Activated CD4-positive, alpha-beta memory T cell treated with anti-CD3 and anti-CD28 coated beads for 36 hours (primary cell): ENCODE measurements at regions of chrX and their contacts with region 1.

Region 1: DNA sequence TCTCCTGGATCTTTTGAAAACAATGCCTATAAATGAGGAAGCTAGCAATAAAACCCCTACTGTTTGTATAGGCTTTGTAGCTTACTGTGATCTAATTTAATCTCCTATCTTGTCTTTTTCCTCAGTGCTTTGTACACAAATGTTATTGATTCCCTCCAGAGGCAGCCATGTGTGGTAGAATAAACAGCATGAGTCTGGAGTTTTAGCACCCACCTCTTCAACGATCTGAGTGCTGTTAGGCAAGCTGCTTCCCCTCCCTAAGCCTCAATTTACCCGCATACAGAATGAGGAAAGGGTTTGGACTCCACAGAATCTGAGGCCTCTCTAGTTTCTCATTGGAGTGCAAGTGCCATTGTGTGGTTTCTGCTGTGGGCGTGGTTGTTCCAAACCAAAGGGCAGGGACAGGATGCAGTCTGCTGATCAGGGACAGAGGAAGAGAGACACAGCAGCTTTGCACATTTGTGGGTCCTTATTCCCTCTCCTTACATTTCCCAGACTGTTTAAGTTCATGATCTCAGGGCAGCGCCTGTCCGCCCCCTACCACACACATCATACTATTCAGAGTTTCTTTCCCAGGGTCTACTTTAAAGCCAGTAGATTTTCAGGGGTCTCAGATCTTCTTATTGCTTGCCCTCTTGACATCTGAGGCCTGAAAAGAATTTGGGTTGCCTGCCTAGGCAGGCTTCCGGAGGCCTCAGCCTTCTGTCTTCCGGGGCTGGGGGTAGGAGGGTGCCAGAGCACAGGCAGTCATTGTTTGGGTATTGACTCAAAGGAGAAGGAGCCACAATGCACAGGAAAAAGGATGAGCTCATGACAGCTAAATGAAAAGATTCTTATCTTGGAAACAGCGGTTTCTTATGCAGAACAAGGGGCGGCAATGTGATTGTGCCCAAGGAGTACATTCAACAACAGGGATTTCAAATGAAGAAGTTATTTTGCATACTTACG is 114.9 kb upstream of the TEX13D start:
- DNase-seq: peak; percentile 78
- H3K4me3 Mint-ChIP-seq: peak overlapping the region; percentile 54
- H3K27ac Mint-ChIP-seq: peak overlapping the region; percentile 96
- H3K4me1 Mint-ChIP-seq: peaks cover 66% of the 10 kb centered on the region
- H3K27me3 Mint-ChIP-seq: no peaks in the 10 kb centered on the region

Region 2: GRCh38 chrX:124086411-124086810 is 131.2 kb before region 1 on chrX:
- CTCF ChIA-PET with region 1: no interaction called
- POLR2A ChIA-PET with region 1: no interaction called
- intact Hi-C with region 1: loop called (anchors 5 kb)
- DNase-seq: peak; percentile 56
- H3K4me3 Mint-ChIP-seq: peak overlapping the region; percentile 7
- H3K27ac Mint-ChIP-seq: peak overlapping the region; percentile 74
- H3K4me1 Mint-ChIP-seq: peaks cover 28% of the 10 kb centered on the region
- H3K27me3 Mint-ChIP-seq: no peaks in the 10 kb centered on the region

Region 3: GRCh38 chrX:124113799-124114600 is 103.6 kb before region 1 on chrX:
- CTCF ChIA-PET with region 1: no interaction called
- POLR2A ChIA-PET with region 1: no interaction called
- intact Hi-C with region 1: no loop called
- DNase-seq: no peak
- H3K4me3 Mint-ChIP-seq: no peak overlapping the region
- H3K27ac Mint-ChIP-seq: no peak overlapping the region
- H3K4me1 Mint-ChIP-seq: no peaks in the 10 kb centered on the region
- H3K27me3 Mint-ChIP-seq: no peaks in the 10 kb centered on the region

Region 4: GRCh38 chrX:124232523-124233201 is 15.1 kb after region 1 on chrX:
- CTCF ChIA-PET with region 1: interaction called, 3 read pairs
- POLR2A ChIA-PET with region 1: interaction called, 10 read pairs
- intact Hi-C with region 1: no loop called
- DNase-seq: peak; percentile 77
- H3K4me3 Mint-ChIP-seq: no peak overlapping the region
- H3K27ac Mint-ChIP-seq: peak overlapping the region; percentile 42
- H3K4me1 Mint-ChIP-seq: peaks cover 20% of the 10 kb centered on the region
- H3K27me3 Mint-ChIP-seq: no peaks in the 10 kb centered on the region

Region 5: DNA sequence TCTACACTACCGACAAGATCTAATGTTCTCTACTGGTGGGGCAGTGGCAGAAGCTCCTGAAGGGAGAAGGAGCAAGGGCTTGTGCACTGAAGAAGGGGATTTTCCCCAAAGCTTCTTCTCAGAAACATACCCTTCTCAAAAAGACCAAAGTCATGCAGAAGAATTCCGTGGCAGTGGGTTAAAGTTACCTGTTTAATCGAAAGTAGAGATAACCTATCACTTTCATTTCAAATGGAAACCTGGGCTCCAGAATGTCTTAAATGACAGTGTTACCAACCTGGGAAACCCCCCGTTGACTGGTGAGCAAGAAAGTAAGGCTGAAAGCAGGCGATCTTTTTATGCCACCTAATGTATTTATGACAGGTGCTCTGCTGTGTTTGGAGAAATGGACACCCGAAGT is 22.3 kb after region 1 on chrX:
- CTCF ChIA-PET with region 1: interaction called, 4 read pairs
- POLR2A ChIA-PET with region 1: interaction called, 14 read pairs
- intact Hi-C with region 1: loop called (anchors 1 kb)
- DNase-seq: peak; percentile 61
- H3K4me3 Mint-ChIP-seq: peak overlapping the region; percentile 46
- H3K27ac Mint-ChIP-seq: peak overlapping the region; percentile 70
- H3K4me1 Mint-ChIP-seq: peaks cover 44% of the 10 kb centered on the region
- H3K27me3 Mint-ChIP-seq: no peaks in the 10 kb centered on the region

Region 6: GRCh38 chrX:124300405-124300804 is 82.8 kb after region 1 on chrX:
- CTCF ChIA-PET with region 1: no interaction called
- POLR2A ChIA-PET with region 1: no interaction called
- intact Hi-C with region 1: loop called (anchors 1 kb)
- DNase-seq: no peak
- H3K4me3 Mint-ChIP-seq: no peak overlapping the region
- H3K27ac Mint-ChIP-seq: peak overlapping the region; percentile 58
- H3K4me1 Mint-ChIP-seq: peaks cover 32% of the 10 kb centered on the region
- H3K27me3 Mint-ChIP-seq: no peaks in the 10 kb centered on the region